HCT116 (cell line): ENCODE measurements at regions of chr1 and their contacts with region 1.

Region 1: GRCh38 chr1:33086384-33086850 is 5.5 kb downstream of the AZIN2 start:
- DNase-seq: peak; percentile 62
- ATAC-seq: peak; percentile 94
- H3K4me3 ChIP-seq: no peak overlapping the region
- H3K27ac ChIP-seq: no peak overlapping the region
- H3K4me1 ChIP-seq: peaks cover 5 to 7% of the 10 kb centered on the region in 2 experiments; a peak in 3 of 4 replicates
- H3K27me3 ChIP-seq: no peaks in the 10 kb centered on the region
- CTCF ChIP-seq: peak; percentile 76 to 87 (median 79)
- POLR2A ChIP-seq: no peak
- RAD21 ChIP-seq: peak; percentile 92

Region 2: GRCh38 chr1:32400876-32401631 is 685.4 kb before region 1 on chr1:
- CTCF ChIA-PET with region 1: interaction called, 6 read pairs
- POLR2A ChIA-PET with region 1: no interaction called
- RAD21 ChIA-PET with region 1: no interaction called
- intact Hi-C with region 1: loop called (anchors 2 kb)
- DNase-seq: peak; percentile 66
- ATAC-seq: peak; percentile 98
- H3K4me3 ChIP-seq: no peak overlapping the region
- H3K27ac ChIP-seq: peak overlapping the region; percentile 37; the same call in 1 of the 2 replicates
- H3K4me1 ChIP-seq: peaks cover 3 to 7% of the 10 kb centered on the region in 2 experiments; a peak in 2 of 4 replicates
- H3K27me3 ChIP-seq: no peaks in the 10 kb centered on the region
- CTCF ChIP-seq: peak; percentile 88 to 97 (median 93)
- POLR2A ChIP-seq: no peak
- RAD21 ChIP-seq: peak; percentile 94

Region 3: DNA sequence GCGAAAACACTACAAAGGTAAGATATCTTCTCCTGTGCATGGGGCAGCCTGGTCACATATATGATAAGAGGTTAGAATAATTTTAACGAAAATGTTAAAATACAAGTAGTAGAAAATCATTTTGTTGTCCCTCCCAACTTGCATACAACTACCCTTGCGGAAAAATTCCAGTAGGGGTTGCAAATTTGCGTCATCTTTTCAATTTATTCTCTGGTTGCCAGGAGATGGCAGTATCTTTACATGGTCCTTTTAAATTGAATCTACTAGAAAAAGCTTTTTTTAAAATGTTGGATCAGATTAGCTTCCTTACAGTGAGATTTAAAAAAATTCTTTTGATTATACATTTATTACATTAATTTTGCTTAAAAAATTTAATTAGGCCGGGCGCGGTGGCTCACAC is 258.1 kb before region 1 on chr1:
- CTCF ChIA-PET with region 1: no interaction called
- POLR2A ChIA-PET with region 1: no interaction called
- RAD21 ChIA-PET with region 1: no interaction called
- intact Hi-C with region 1: loop called (anchors 2 kb)
- DNase-seq: no peak
- ATAC-seq: no peak
- H3K4me3 ChIP-seq: no peak overlapping the region
- H3K27ac ChIP-seq: no peak overlapping the region
- H3K4me1 ChIP-seq: no peaks in the 10 kb centered on the region
- H3K27me3 ChIP-seq: no peaks in the 10 kb centered on the region
- CTCF ChIP-seq: peak in 2 of 3 experiments; percentile 37 to 40; a peak in 3 of 6 replicates
- POLR2A ChIP-seq: no peak
- RAD21 ChIP-seq: peak; percentile 41; the same call in 1 of the 2 replicates

Region 4: GRCh38 chr1:32876341-32877210 is 209.8 kb before region 1 on chr1:
- CTCF ChIA-PET with region 1: interaction called, 27 read pairs
- POLR2A ChIA-PET with region 1: no interaction called
- RAD21 ChIA-PET with region 1: interaction called, 3 to 4 read pairs
- intact Hi-C with region 1: loop called (anchors 1 kb)
- DNase-seq: peak; percentile 28
- ATAC-seq: peak; percentile 90
- H3K4me3 ChIP-seq: no peak overlapping the region
- H3K27ac ChIP-seq: no peak overlapping the region
- H3K4me1 ChIP-seq: peaks cover 2 to 16% of the 10 kb centered on the region in 2 experiments; a peak in 3 of 4 replicates
- H3K27me3 ChIP-seq: no peaks in the 10 kb centered on the region
- CTCF ChIP-seq: peak; percentile 86 to 98 (median 97)
- POLR2A ChIP-seq: no peak
- RAD21 ChIP-seq: peak; percentile 82

Region 5: DNA sequence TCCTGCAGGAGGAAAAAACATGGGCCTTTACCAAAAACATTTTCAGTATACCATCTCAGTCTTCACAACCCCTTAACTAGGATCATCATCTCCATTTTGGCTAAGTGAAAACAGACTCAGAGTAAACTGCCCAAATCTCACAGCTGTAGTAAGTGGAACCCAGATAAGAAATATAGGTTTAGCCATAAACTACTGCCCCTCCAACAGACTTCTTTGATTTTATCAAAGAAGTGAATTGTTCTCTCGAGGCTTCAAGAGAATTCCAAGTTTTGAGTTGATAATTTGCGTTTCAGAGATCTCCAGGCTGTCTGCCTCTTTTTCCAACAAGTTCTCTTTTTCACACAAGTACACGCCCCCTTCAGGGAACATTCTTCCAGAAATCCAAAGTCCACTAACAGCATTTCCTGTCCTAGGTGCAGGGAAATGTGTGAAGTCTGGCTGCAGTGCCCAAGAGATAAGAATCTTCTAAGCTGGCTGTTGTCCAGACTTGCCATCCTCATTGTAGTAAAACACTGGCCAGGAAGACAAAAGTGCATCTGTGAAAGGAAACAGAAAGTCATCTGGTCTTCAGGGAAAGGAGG is 152.6 kb before region 1 on chr1:
- CTCF ChIA-PET with region 1: interaction called, 10 read pairs
- POLR2A ChIA-PET with region 1: no interaction called
- RAD21 ChIA-PET with region 1: interaction called, 5 to 7 read pairs
- intact Hi-C with region 1: loop called (anchors 1 kb)
- DNase-seq: no peak
- ATAC-seq: peak; percentile 46
- H3K4me3 ChIP-seq: no peak overlapping the region
- H3K27ac ChIP-seq: peak overlapping the region; percentile 16
- H3K4me1 ChIP-seq: peaks cover 12 to 19% of the 10 kb centered on the region in 2 experiments; a peak in 3 of 4 replicates
- H3K27me3 ChIP-seq: no peaks in the 10 kb centered on the region
- CTCF ChIP-seq: no peak
- POLR2A ChIP-seq: no peak
- RAD21 ChIP-seq: no peak